ENCODE measurements at regions of chr13 and their contacts with region 1.

Region 1: GRCh38 chr13:19863323-19864023 is at the start of gene ZMYM5:
- DNase-seq: peak; percentile 97
- ATAC-seq: peak; percentile 90
- H3K4me3 Mint-ChIP-seq: peak within 1 kb of the TSS; percentile 97
- H3K27ac Mint-ChIP-seq: peak within 1 kb of the TSS; percentile 99
- H3K4me1 Mint-ChIP-seq: peaks cover 38% of the 10 kb centered on the region
- H3K27me3 Mint-ChIP-seq: no peaks in the 10 kb centered on the region
- CTCF ChIP-seq: no peak
- total RNA-seq, gene ZMYM5: 10.1 to 10.4 TPM

Region 2: GRCh38 chr13:19681517-19681916 is 182.0 kb before region 1 on chr13:
- CTCF ChIA-PET with region 1: no interaction called
- POLR2A ChIA-PET with region 1: interaction called, 3 read pairs
- intact Hi-C with region 1: loop called (anchors 10 kb)
- DNase-seq: peak; percentile 13
- ATAC-seq: peak; percentile 76
- H3K4me3 Mint-ChIP-seq: no peak overlapping the region
- H3K27ac Mint-ChIP-seq: peak overlapping the region; percentile 61
- H3K4me1 Mint-ChIP-seq: peaks cover 37% of the 10 kb centered on the region
- H3K27me3 Mint-ChIP-seq: no peaks in the 10 kb centered on the region
- CTCF ChIP-seq: no peak

Region 3: GRCh38 chr13:19782049-19782726 is 81.3 kb before region 1 on chr13:
- CTCF ChIA-PET with region 1: interaction called, 9 read pairs
- POLR2A ChIA-PET with region 1: interaction called, 9 read pairs
- intact Hi-C with region 1: loop called (anchors 10 kb)
- DNase-seq: peak; percentile 64
- ATAC-seq: peak; percentile 47
- H3K4me3 Mint-ChIP-seq: peak overlapping the region; percentile 82
- H3K27ac Mint-ChIP-seq: peak overlapping the region; percentile 97
- H3K4me1 Mint-ChIP-seq: peaks cover 5% of the 10 kb centered on the region
- H3K27me3 Mint-ChIP-seq: no peaks in the 10 kb centered on the region
- CTCF ChIP-seq: no peak

Region 4: DNA sequence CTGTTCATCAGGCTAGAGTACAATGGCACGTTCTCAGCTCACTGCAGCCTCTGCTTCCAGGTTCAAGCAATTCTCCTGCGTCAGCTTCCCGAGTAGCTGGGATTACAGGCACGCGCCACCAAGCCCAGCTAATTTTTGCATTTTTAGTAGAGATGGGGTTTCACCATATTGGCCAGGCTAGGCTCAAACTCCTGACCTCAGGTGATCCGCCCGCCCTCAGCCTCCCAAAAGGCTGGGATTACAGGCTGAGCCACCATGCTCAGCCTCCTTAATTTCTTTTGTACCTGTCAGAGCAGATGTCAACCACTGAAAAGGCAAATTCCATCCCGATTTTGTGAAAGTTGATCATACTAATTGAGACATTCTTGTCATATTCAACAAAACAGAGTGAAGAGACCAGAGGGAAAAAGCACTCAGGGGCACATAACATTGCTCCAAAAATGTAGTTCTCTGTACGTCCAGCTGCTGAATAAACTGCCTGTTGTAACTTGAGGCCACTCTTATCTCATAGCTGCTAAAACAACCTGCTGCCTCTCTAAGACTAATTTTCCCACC is 53.4 kb before region 1 on chr13:
- CTCF ChIA-PET with region 1: no interaction called
- POLR2A ChIA-PET with region 1: no interaction called
- intact Hi-C with region 1: no loop called
- DNase-seq: no peak
- ATAC-seq: no peak
- H3K4me3 Mint-ChIP-seq: no peak overlapping the region
- H3K27ac Mint-ChIP-seq: no peak overlapping the region
- H3K4me1 Mint-ChIP-seq: peaks cover 6% of the 10 kb centered on the region
- H3K27me3 Mint-ChIP-seq: no peaks in the 10 kb centered on the region
- CTCF ChIP-seq: no peak

Region 5: GRCh38 chr13:19959831-19960652 is 96.6 kb after region 1 on chr13:
- CTCF ChIA-PET with region 1: interaction called, 6 read pairs
- POLR2A ChIA-PET with region 1: interaction called, 4 read pairs
- intact Hi-C with region 1: loop called (anchors 5 kb)
- DNase-seq: peak; percentile 93
- ATAC-seq: peak; percentile 58
- H3K4me3 Mint-ChIP-seq: peak overlapping the region; percentile 94
- H3K27ac Mint-ChIP-seq: peak overlapping the region; percentile 98
- H3K4me1 Mint-ChIP-seq: peaks cover 32% of the 10 kb centered on the region
- H3K27me3 Mint-ChIP-seq: no peaks in the 10 kb centered on the region
- CTCF ChIP-seq: peak; percentile 82